Lower lobe of right lung (tissue), 2 donors: ENCODE measurements at regions of chr11 and their contacts with region 1.

Region 1: DNA sequence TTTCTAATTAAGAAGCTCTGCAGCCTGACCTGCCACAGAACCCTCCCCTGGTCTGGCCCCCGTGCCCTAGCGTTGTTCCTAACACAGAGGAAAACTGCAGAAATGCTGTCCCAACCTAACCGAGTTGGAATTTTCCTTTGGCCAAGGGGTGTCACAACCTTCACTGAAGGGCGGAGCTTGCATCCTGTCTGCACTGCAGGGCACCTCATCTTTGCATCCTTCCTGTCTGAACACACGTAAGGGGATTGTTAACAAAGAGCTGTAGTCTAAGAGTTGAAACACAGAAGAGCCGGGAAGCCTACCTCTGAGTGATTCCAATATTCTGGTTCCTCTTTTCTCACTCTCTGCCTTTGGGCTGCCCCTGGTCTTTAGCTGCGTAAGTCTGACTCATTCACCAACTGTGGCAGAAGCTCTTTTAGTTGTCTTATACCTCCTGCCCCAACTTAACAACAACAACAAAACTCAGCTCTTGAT is 1.6 kb downstream of the DIXDC1 start:
- DNase-seq: no peak
- ATAC-seq: peak; percentile 41 to 42
- H3K4me3 ChIP-seq: no peak overlapping the region
- H3K27ac ChIP-seq: no peak overlapping the region
- H3K4me1 ChIP-seq: peaks cover 30% of the 10 kb centered on the region
- H3K27me3 ChIP-seq: no peaks in the 10 kb centered on the region
- CTCF ChIP-seq: no peak

Region 2: DNA sequence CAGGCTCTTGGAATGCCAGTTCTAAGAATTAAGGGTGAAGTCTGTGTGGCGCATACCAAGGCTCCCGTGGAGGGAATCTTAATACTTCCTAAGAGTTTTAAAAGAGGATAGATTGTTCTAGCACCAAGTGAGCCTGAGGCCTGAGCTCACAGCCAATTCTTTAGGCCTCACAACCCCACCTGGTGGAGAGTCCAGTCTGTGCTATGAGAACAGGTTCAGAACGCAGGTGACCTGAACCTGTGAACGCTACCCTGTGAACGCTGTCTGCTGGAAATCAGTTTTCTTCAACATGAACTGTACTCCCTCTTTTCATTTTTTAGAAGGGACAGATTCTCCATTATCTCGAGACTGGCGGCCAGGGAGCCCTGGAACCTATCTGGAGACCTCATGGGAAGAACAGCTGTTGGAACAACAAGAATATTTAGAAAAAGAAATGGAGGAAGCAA is 43.3 kb after region 1 on chr11:
- intact Hi-C with region 1: loop called (anchors 10 kb)
- DNase-seq: peak; percentile 75
- ATAC-seq: peak; percentile 91 to 92
- H3K4me3 ChIP-seq: peak overlapping the region; percentile 45
- H3K27ac ChIP-seq: peak overlapping the region; percentile 55
- H3K4me1 ChIP-seq: peaks cover 23% of the 10 kb centered on the region
- H3K27me3 ChIP-seq: no peaks in the 10 kb centered on the region
- CTCF ChIP-seq: peak; percentile 60

Region 3: DNA sequence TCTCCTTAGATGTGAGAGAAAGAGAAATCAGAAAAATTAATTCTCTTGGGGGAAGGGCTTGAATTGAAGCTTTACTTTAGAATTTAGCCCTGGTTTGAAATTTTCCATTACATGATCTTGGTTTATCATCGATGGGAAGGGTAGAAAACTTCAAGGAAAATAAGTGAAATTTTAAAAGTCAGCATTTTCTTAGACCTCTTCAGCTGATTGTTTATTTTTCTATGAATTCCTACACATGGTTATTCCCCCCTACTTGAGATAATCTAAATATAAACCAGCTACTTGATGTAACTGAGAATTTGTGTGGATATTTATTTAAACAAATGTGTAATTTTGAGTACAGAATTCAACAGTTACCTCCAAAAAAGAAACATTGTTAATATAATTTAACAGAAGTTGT is 124.2 kb after region 1 on chr11:
- intact Hi-C with region 1: no loop called
- DNase-seq: no peak
- ATAC-seq: no peak
- H3K4me3 ChIP-seq: no peak overlapping the region
- H3K27ac ChIP-seq: no peak overlapping the region
- H3K4me1 ChIP-seq: no peaks in the 10 kb centered on the region
- H3K27me3 ChIP-seq: no peaks in the 10 kb centered on the region
- CTCF ChIP-seq: no peak